K562 (cell line): ENCODE measurements at regions of chr1 and their contacts with region 1.

Region 1: DNA sequence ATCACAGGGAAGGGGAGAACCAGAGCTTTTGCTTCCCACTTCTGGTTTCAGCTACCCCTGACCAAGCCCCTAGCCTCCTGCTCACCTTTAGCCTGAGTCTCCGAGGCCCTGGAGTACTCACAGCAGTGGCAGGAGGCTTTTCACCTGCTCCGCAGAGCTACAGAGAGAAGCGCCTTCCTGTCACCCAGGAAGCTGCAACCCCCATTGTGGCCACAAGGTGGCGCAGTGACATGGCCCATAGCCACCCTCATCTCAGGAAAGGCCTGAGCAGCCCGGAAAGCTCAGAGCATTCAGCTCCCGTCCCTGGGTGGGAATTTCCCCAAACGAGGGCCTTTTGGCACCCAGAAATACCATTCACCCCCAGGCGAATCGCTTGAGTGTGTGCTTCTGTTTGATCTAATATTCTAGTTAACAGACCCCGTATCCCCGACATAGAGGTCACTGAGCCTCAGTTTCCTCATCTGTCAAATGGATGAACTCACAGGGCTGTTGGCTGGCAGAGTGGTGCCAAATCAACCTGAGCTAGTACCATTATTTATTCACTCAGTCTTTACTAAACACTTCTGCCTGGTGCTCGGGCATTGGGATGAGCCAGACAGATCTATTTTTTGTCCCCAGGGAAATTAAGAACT is 25.3 kb downstream of the A3GALT2 start:
- DNase-seq: peak; percentile 89 to 91 (median 90)
- ATAC-seq: peak; percentile 96
- H3K4me3 ChIP-seq: no peak overlapping the region
- H3K27ac ChIP-seq: no peak overlapping the region
- H3K4me1 ChIP-seq: peaks cover 0 to 6% of the 10 kb centered on the region in 2 experiments; a peak in 1 of 5 replicates
- H3K27me3 ChIP-seq: peaks cover 0 to 23% of the 10 kb centered on the region in 2 experiments; a peak in 3 of 5 replicates
- CTCF ChIP-seq: peak; percentile 95 to 98 (median 98)
- EP300 ChIP-seq: no peak
- POLR2A ChIP-seq: no peak
- RAD21 ChIP-seq: peak; percentile 93 to 97

Region 2: GRCh38 chr1:32619701-32620485 is 675.7 kb before region 1 on chr1:
- CTCF ChIA-PET with region 1: no interaction called
- POLR2A ChIA-PET with region 1: no interaction called
- in situ Hi-C with region 1: no loop called
- intact Hi-C with region 1: no loop called
- DNase-seq: no peak
- ATAC-seq: no peak
- H3K4me3 ChIP-seq: no peak overlapping the region
- H3K27ac ChIP-seq: no peak overlapping the region
- H3K4me1 ChIP-seq: no peaks in the 10 kb centered on the region; a peak in 1 of 5 replicates
- H3K27me3 ChIP-seq: no peaks in the 10 kb centered on the region
- CTCF ChIP-seq: peak in 2 of 3 experiments; percentile 3 to 43; a peak in 3 of 6 replicates
- EP300 ChIP-seq: no peak
- POLR2A ChIP-seq: no peak
- RAD21 ChIP-seq: peak; percentile 40

Region 3: DNA sequence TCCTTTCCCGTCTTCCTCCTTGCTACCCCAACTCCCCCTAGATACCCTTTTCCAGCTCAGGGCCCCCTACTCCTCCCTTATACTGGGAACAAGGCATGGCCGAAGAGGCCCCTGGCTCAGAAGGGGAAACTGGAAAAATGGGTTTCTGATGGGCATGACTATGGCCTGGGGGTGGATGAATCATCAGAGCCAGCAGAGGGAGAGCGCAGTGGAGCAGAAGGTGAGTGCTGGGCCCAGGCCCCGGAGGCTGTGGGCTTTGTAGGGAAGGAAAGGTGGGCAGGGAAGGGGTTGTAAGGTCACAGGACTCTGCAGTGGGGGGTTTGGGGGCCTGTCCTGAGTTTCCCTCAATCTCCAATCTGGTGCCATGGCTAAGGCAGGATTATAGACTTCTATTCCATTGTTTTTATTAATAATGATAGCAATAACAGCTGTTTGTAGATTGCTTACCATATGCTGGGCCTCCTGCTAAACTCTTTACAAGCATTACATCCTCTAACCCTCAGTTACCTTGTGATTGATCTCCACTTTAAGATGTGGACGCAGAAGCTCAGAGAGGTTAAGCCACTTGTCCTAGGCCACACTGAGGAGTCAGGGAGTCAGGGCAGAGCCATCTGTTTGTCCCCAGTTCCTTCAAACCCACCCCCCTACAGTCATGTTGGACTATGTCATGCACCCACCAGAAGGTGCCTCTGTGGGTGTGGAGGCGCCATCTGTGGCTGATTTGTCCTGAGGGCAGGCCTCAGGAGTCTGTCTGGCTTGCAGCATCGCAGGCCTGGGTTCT is 75.5 kb before region 1 on chr1:
- CTCF ChIA-PET with region 1: no interaction called
- POLR2A ChIA-PET with region 1: no interaction called
- in situ Hi-C with region 1: no loop called
- intact Hi-C with region 1: loop called (anchors 1 kb)
- DNase-seq: no peak
- ATAC-seq: no peak
- H3K4me3 ChIP-seq: no peak overlapping the region
- H3K27ac ChIP-seq: no peak overlapping the region
- H3K4me1 ChIP-seq: no peaks in the 10 kb centered on the region
- H3K27me3 ChIP-seq: peaks cover 0 to 7% of the 10 kb centered on the region in 2 experiments; a peak in 1 of 5 replicates
- CTCF ChIP-seq: no peak
- EP300 ChIP-seq: no peak
- POLR2A ChIP-seq: no peak
- RAD21 ChIP-seq: no peak

Region 4: GRCh38 chr1:33455539-33456501 is 160.3 kb after region 1 on chr1:
- CTCF ChIA-PET with region 1: interaction called, 10 read pairs
- POLR2A ChIA-PET with region 1: interaction called, 3 read pairs
- in situ Hi-C with region 1: loop called (anchors 10 kb)
- intact Hi-C with region 1: loop called (anchors 1 kb)
- DNase-seq: peak; percentile 45 to 70 (median 56)
- ATAC-seq: peak; percentile 95
- H3K4me3 ChIP-seq: no peak overlapping the region
- H3K27ac ChIP-seq: no peak overlapping the region
- H3K4me1 ChIP-seq: peaks cover 0 to 4% of the 10 kb centered on the region in 2 experiments; a peak in 1 of 5 replicates
- H3K27me3 ChIP-seq: peaks cover 11 to 27% of the 10 kb centered on the region in 2 experiments; a peak in 3 of 5 replicates
- CTCF ChIP-seq: peak; percentile 74 to 91 (median 75)
- EP300 ChIP-seq: no peak
- POLR2A ChIP-seq: no peak
- RAD21 ChIP-seq: peak; percentile 92 to 97

Region 5: GRCh38 chr1:33610864-33611455 is 315.4 kb after region 1 on chr1:
- CTCF ChIA-PET with region 1: no interaction called
- POLR2A ChIA-PET with region 1: no interaction called
- in situ Hi-C with region 1: loop called (anchors 5 kb)
- intact Hi-C with region 1: loop called (anchors 2 kb)
- DNase-seq: no peak
- ATAC-seq: no peak
- H3K4me3 ChIP-seq: no peak overlapping the region
- H3K27ac ChIP-seq: no peak overlapping the region
- H3K4me1 ChIP-seq: no peaks in the 10 kb centered on the region
- H3K27me3 ChIP-seq: peaks cover 8 to 37% of the 10 kb centered on the region in 2 experiments; a peak in 4 of 5 replicates
- CTCF ChIP-seq: no peak
- EP300 ChIP-seq: no peak
- POLR2A ChIP-seq: no peak
- RAD21 ChIP-seq: no peak